GM12878 (cell line): ENCODE measurements at regions of chr3 and their contacts with region 1.

Region 1: DNA sequence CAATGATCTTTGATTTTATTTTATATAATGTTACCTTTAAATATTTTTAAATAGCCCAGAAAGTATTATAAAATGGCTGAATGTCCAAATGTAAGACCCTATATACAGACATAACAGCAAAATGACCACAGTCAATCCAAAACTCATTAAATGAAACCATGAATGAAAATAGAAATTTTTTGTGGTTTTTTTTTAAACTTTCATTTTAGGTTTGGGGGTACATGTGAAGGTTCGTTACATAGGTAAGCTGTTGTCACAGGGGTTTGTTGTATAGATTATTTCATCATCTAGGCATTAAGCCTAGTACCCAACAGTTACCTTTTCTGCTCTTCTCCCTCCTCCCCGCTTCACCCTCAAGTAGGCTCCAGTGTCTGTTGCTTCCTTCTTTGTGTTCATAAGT is 108.8 kb downstream of the FAIM start:
- DNase-seq: peak; percentile 37
- ATAC-seq: peak; percentile 89
- H3K4me3 ChIP-seq: no peak overlapping the region
- H3K27ac ChIP-seq: no peak overlapping the region
- H3K4me1 ChIP-seq: peaks cover 5% of the 10 kb centered on the region; the same call in 1 of the 2 replicates
- H3K27me3 ChIP-seq: no peaks in the 10 kb centered on the region
- CTCF ChIP-seq: no peak
- EP300 ChIP-seq: no peak
- POLR2A ChIP-seq: no peak
- RAD21 ChIP-seq: no peak

Region 2: DNA sequence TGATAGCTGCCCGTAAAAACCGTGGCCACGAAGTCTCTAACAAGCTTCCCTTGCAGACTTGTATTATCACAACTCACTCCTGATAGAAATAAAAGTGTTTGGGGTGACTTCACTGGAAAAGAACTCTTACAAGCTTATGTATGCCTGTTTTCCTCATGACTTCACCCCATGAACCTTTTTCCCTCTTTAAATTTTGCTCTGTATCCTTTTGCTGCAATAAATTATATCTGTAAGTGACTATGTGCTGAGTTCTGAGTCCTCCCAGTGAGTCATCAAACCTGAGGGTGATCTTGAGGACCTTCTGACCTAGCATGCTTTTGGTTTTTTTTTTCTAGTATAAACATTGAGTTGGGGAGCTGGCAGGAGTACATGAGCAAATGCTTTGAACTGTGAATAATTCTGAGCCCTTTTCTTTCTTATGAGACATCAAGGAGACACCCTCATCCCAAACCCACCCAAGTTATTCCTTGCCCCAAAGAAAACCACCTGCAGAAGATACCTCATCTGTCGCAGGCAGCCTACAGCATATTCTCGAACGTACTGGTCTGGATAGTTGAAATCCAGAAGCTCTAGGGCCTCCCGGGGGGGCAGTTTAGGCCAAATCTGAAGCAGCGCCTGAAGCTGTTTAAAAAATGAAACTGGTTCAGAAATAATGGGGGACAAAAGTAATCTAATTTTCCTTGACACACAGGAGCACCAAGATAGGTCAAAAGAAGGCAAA is 22.9 kb before region 1 on chr3:
- CTCF ChIA-PET with region 1: interaction called, 14 read pairs
- POLR2A ChIA-PET with region 1: interaction called, 5 read pairs
- RAD21 ChIA-PET with region 1: interaction called, 3 read pairs
- SMC1A ChIA-PET with region 1: interaction called, 3 read pairs
- in situ Hi-C with region 1: no loop called
- intact Hi-C with region 1: no loop called
- DNase-seq: no peak
- ATAC-seq: no peak
- H3K4me3 ChIP-seq: no peak overlapping the region
- H3K27ac ChIP-seq: no peak overlapping the region
- H3K4me1 ChIP-seq: no peaks in the 10 kb centered on the region
- H3K27me3 ChIP-seq: no peaks in the 10 kb centered on the region
- CTCF ChIP-seq: no peak
- EP300 ChIP-seq: no peak
- POLR2A ChIP-seq: no peak
- RAD21 ChIP-seq: no peak

Region 3: GRCh38 chr3:138705675-138706074 is 11.7 kb before region 1 on chr3:
- CTCF ChIA-PET with region 1: interaction called, 14 read pairs
- POLR2A ChIA-PET with region 1: interaction called, 3 read pairs
- RAD21 ChIA-PET with region 1: interaction called, 6 read pairs
- SMC1A ChIA-PET with region 1: interaction called, 13 read pairs
- in situ Hi-C with region 1: no loop called
- intact Hi-C with region 1: no loop called
- DNase-seq: no peak
- ATAC-seq: no peak
- H3K4me3 ChIP-seq: no peak overlapping the region
- H3K27ac ChIP-seq: no peak overlapping the region
- H3K4me1 ChIP-seq: no peaks in the 10 kb centered on the region
- H3K27me3 ChIP-seq: no peaks in the 10 kb centered on the region
- CTCF ChIP-seq: no peak
- EP300 ChIP-seq: no peak
- POLR2A ChIP-seq: no peak
- RAD21 ChIP-seq: no peak

Region 4: GRCh38 chr3:138834359-138835212 is 117.2 kb after region 1 on chr3 and contains the start of gene PIK3CB:
- CTCF ChIA-PET with region 1: no interaction called
- POLR2A ChIA-PET with region 1: no interaction called
- RAD21 ChIA-PET with region 1: no interaction called
- SMC1A ChIA-PET with region 1: no interaction called
- in situ Hi-C with region 1: no loop called
- intact Hi-C with region 1: loop called (anchors 10 kb)
- DNase-seq: no peak
- ATAC-seq: peak; percentile 97
- H3K4me3 ChIP-seq: peak within 1 kb of the TSS; percentile 84
- H3K27ac ChIP-seq: peak within 1 kb of the TSS; percentile 88
- H3K4me1 ChIP-seq: peaks cover 6% of the 10 kb centered on the region
- H3K27me3 ChIP-seq: no peaks in the 10 kb centered on the region
- CTCF ChIP-seq: peak; percentile 10 to 47 (median 27); a peak in 3 of 6 replicates
- EP300 ChIP-seq: no peak
- POLR2A ChIP-seq: peak; percentile 94
- RAD21 ChIP-seq: no peak
- polyA plus RNA-seq, gene PIK3CB: 5.0 to 5.5 TPM